ENCODE measurements at regions of chr1 and their contacts with region 1.

Region 1: GRCh38 chr1:20507564-20508410 is at the start of gene MUL1:
- DNase-seq: peak; percentile 85 to 97 (median 95)
- ATAC-seq: peak; percentile 83
- H3K4me3 ChIP-seq: peak within 1 kb of the TSS; percentile 78 to 99
- H3K4me3 Mint-ChIP-seq: peak within 1 kb of the TSS; percentile 87
- H3K27ac ChIP-seq: peak within 1 kb of the TSS; percentile 91 to 99
- H3K27ac Mint-ChIP-seq: peak within 1 kb of the TSS; percentile 97
- H3K4me1 ChIP-seq: peaks cover 32% of the 10 kb centered on the region
- H3K4me1 Mint-ChIP-seq: peaks cover 28% of the 10 kb centered on the region
- H3K27me3 ChIP-seq: peaks cover 0 to 2% of the 10 kb centered on the region in 2 experiments
- H3K27me3 Mint-ChIP-seq: peaks cover 6% of the 10 kb centered on the region
- CTCF ChIP-seq: no peak
- total RNA-seq, gene MUL1: 19.7 to 22.5 TPM

Region 2: DNA sequence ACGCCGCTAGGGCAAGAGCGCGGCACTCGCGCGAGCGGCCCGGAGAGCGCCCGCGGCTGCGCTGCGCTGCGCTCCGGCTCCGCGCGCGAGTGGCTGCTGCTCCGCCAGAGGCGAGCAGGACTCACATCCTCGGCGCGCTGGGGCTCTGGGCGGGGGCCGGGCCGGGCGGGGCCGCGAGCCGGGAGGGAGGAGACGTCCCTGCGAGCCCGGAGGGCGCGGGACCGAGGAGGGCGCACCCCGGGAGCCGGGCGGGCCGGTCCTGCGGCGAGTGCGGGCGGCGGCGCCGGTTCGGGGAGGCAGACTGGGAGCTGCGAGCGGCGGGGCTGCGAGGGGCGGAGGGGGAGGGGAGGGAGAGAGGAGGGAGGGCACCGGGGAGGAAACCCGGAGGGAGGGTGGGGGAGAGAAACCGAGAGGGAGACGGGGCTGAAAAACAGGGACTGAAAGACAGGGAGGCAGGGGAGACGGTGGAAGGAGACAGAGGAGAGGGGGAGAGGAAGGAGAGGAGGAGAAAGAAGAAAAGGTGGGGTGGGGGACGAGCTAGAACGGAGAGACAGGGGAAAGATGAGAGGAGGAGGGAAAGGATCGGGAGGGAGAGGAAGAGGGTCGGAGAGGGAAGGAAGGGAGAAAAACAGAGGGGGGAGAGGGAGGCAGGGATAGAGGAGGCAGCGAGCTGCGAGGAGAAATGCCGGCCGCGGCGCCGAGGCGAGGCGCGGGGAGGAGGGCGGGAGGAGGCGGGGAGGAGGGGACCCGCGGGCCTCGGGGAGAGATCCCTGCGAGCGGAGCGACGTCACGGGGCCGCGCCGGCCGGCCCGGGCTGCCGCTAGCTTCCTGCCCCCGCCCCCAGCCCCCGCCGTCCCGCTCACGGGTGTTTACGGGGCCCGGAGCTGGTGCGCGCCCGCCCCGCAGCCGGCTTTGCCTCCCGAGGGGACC is 22.0 kb before region 1 on chr1 and contains the start of gene CAMK2N1:
- CTCF ChIA-PET with region 1: interaction called, 4 read pairs
- POLR2A ChIA-PET with region 1: interaction called, 6 read pairs
- intact Hi-C with region 1: loop called in 1 of 2 experiments (anchors 1 kb)
- DNase-seq: peak; percentile 34 to 81 (median 56)
- ATAC-seq: peak; percentile 68
- H3K4me3 ChIP-seq: peak within 1 kb of the TSS; percentile 65 to 69
- H3K4me3 Mint-ChIP-seq: peak within 1 kb of the TSS; percentile 87
- H3K27ac ChIP-seq: peak within 1 kb of the TSS; percentile 39 to 42
- H3K27ac Mint-ChIP-seq: no peak within 1 kb of the TSS
- H3K4me1 ChIP-seq: peaks cover 25% of the 10 kb centered on the region
- H3K4me1 Mint-ChIP-seq: peaks cover 17% of the 10 kb centered on the region
- H3K27me3 ChIP-seq: peaks cover 21 to 23% of the 10 kb centered on the region in 2 experiments
- H3K27me3 Mint-ChIP-seq: peaks cover 34% of the 10 kb centered on the region
- CTCF ChIP-seq: no peak
- total RNA-seq, gene CAMK2N1: 6.6 to 8.4 TPM

Region 3: DNA sequence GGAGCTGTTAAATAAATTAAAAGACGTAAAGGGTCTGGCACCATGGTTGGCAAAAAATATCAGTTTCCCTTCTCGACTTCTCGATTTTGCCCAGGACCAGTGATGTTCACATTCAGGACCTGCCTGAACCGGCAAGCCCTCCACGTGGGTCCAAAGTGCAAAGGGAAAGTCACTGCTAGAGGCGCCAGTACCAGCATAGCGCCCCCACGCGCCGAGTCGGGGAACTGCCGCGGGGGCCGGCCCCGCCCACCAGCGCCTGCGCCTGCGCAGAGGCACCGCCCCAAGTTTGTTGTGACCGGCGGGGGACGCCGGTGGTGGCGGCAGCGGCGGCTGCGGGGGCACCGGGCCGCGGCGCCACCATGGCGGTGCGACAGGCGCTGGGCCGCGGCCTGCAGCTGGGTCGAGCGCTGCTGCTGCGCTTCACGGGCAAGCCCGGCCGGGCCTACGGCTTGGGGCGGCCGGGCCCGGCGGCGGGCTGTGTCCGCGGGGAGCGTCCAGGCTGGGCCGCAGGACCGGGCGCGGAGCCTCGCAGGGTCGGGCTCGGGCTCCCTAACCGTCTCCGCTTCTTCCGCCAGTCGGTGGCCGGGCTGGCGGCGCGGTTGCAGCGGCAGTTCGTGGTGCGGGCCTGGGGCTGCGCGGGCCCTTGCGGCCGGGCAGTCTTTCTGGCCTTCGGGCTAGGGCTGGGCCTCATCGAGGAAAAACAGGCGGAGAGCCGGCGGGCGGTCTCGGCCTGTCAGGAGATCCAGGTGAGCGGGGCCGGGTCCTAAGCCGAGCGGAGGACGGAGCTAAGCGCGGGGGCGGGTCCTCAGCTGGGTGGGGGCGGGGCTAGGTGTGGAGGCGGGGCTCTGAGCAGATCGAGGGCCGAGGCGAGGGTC is 125.6 kb after region 1 on chr1 and contains the start of gene PINK1:
- CTCF ChIA-PET with region 1: interaction called, 6 read pairs
- POLR2A ChIA-PET with region 1: no interaction called
- intact Hi-C with region 1: loop called (anchors 1 kb)
- DNase-seq: peak; percentile 74 to 94 (median 87)
- ATAC-seq: peak; percentile 90
- H3K4me3 ChIP-seq: peak within 1 kb of the TSS; percentile 59 to 62
- H3K4me3 Mint-ChIP-seq: peak within 1 kb of the TSS; percentile 87
- H3K27ac ChIP-seq: peak within 1 kb of the TSS; percentile 46 to 55
- H3K27ac Mint-ChIP-seq: peak within 1 kb of the TSS; percentile 85
- H3K4me1 ChIP-seq: peaks cover 8% of the 10 kb centered on the region
- H3K4me1 Mint-ChIP-seq: peaks cover 9% of the 10 kb centered on the region
- H3K27me3 ChIP-seq: no peaks in the 10 kb centered on the region
- H3K27me3 Mint-ChIP-seq: no peaks in the 10 kb centered on the region
- CTCF ChIP-seq: peak; percentile 98
- total RNA-seq, gene PINK1: 8.0 to 8.3 TPM

Region 4: DNA sequence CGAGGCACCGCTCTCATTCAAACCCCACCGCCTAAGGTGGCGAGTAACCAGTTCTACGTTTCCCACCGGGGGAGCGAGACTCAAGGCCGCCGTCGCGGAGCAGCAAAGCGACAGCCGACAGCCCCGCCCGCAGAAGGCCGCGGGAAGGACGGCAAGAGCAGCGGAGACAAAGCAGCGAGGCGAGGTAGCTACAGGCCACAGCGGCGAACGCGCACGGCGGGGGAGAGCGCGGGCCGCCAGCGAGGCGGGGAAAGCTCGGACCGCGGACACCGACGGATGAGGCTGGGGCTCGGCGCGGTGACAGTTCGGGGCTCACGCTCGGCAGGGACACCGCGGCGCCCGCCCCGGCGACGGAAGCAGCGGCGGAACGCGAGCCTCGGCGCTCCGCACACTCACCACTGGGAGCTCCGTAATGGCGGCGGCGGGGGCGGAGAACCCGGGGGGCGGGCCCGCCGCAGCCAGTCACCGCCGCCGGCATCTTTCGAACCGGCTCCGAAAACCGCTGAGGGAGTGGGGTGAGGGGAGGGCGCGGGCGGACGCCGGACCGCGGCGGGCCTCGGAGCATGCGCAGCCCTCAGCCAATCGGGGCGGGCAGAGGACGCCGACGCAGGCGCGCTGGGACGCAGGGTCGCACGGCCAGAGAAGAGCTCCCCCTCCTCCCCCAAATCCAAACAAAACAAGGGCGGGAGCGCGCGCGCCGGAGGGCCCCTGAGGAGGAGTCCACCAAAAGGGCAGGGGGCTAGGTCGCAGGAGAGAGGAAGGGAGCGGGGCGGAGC is 278.7 kb after region 1 on chr1:
- CTCF ChIA-PET with region 1: no interaction called
- POLR2A ChIA-PET with region 1: no interaction called
- intact Hi-C with region 1: loop called in 1 of 2 experiments (anchors 5 kb)
- DNase-seq: peak; percentile 89 to 98 (median 95)
- ATAC-seq: peak; percentile 73
- H3K4me3 ChIP-seq: peak overlapping the region; percentile 86 to 95
- H3K4me3 Mint-ChIP-seq: peak overlapping the region; percentile 99
- H3K27ac ChIP-seq: peak overlapping the region; percentile 81 to 88
- H3K27ac Mint-ChIP-seq: peak overlapping the region; percentile 98
- H3K4me1 ChIP-seq: peaks cover 32% of the 10 kb centered on the region
- H3K4me1 Mint-ChIP-seq: peaks cover 38% of the 10 kb centered on the region
- H3K27me3 ChIP-seq: no peaks in the 10 kb centered on the region
- H3K27me3 Mint-ChIP-seq: no peaks in the 10 kb centered on the region
- CTCF ChIP-seq: no peak

Region 5: DNA sequence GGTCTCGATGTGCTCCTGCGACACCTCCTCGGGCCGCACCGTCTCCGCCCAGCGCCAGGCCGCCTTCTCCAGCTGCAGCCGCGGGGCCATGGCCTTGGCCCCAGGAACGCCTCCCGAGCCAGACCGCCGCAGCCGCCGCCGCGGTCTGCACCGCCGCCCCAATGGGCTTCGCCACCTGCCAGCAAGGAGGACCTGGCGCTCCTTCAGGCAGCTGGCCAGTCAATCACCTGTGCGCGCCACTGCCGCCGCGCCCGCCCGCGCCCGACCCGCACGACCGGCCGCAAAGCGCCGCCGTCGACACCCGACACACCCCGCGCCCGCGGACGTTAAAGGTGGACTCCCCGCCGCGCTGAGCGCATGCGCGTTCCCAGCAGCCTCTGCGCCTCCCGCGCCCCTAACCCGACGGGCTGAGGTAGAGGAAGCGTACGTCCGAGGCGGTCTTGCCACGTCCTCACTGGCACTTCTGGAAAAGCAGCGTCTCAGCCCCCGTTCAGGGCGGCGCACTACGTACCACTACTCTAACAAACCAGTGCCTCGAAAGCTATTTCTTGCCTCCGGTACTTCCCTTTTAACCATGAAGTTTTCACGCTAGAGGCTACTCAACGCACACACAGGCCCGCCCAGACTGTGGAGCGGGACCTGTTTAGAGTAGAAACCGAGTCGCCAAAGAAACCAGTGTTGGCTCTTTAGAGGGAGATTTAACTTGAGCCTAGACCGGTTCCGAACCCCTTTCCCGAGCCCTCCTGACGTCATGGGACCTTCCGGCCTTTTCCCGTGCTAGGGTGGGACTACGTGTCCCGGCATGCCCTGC is 1275.3 kb after region 1 on chr1 and contains the start of gene USP48:
- CTCF ChIA-PET with region 1: no interaction called
- POLR2A ChIA-PET with region 1: no interaction called
- intact Hi-C with region 1: loop called in 1 of 2 experiments (anchors 5 kb)
- DNase-seq: peak; percentile 93 to 98 (median 96)
- ATAC-seq: peak; percentile 83
- H3K4me3 ChIP-seq: peak within 1 kb of the TSS; percentile 89 to 100
- H3K4me3 Mint-ChIP-seq: peak within 1 kb of the TSS; percentile 98
- H3K27ac ChIP-seq: peak within 1 kb of the TSS; percentile 100
- H3K27ac Mint-ChIP-seq: peak within 1 kb of the TSS; percentile 100
- H3K4me1 ChIP-seq: peaks cover 10% of the 10 kb centered on the region
- H3K4me1 Mint-ChIP-seq: peaks cover 31% of the 10 kb centered on the region
- H3K27me3 ChIP-seq: no peaks in the 10 kb centered on the region
- H3K27me3 Mint-ChIP-seq: no peaks in the 10 kb centered on the region
- CTCF ChIP-seq: no peak
- total RNA-seq, gene USP48: 58.7 to 68.3 TPM

Measured in CD8-positive, alpha-beta T cell (primary cell).